RWPE1 (cell line): ENCODE measurements at regions of chr2 and their contacts with region 1.

Region 1: GRCh38 chr2:230053753-230054478 is 14.8 kb downstream of the SLC16A14 start:
- DNase-seq: peak; percentile 75
- H3K27ac ChIP-seq: peak overlapping the region; percentile 41
- CTCF ChIP-seq: no peak

Region 2: GRCh38 chr2:230068016-230068650 is 14.2 kb after region 1 on chr2:
- CTCF ChIA-PET with region 1: interaction called, 10 read pairs
- POLR2A ChIA-PET with region 1: no interaction called
- DNase-seq: peak; percentile 28
- H3K27ac ChIP-seq: peak overlapping the region; percentile 69
- CTCF ChIP-seq: no peak

Region 3: DNA sequence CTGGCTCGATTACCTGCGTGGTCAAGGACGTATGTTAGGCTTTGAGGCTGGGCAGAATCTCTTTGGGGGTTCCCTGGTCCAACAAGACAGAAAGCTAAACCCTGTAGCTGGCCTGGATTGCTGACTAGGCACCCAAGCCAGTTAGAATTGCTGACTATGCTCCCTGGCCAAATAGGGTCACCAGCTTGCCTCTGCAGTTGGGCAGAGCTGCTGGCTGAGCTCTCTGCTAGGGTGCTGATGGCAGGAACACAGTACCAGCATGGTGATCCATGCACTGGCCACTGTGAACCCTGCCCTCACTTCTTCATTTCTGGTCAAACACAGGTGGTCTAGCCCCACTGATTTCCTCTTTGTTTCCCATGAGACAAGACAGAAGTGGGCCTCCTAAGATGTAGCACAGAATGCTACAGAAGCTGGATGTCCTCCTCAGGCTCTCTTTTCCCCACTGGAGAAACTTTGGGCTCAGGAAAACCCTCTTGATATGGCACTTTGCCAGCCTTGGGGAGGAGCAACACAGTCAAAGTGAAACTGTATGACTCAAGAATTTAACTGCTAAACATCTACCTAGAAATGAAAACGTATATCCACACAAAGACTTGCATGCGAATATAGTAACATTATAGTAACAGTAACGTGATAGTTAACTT is 293.9 kb after region 1 on chr2:
- CTCF ChIA-PET with region 1: no interaction called
- POLR2A ChIA-PET with region 1: no interaction called
- DNase-seq: peak; percentile 22
- H3K27ac ChIP-seq: no peak overlapping the region
- CTCF ChIP-seq: no peak